ENCODE measurements at regions of chr6 and their contacts with region 1.

Region 1: GRCh38 chr6:155314092-155314772 is at the start of gene TFB1M:
- DNase-seq: peak; percentile 97 to 98 (median 97)
- H3K4me3 ChIP-seq: peak within 1 kb of the TSS; percentile 85 to 95
- H3K4me3 Mint-ChIP-seq: peak within 1 kb of the TSS; percentile 92 to 98 (median 96)
- H3K27ac ChIP-seq: peak within 1 kb of the TSS; percentile 96
- H3K27ac Mint-ChIP-seq: peak within 1 kb of the TSS; percentile 95 to 98 (median 97)
- H3K4me1 ChIP-seq: peaks cover 37% of the 10 kb centered on the region
- H3K4me1 Mint-ChIP-seq: peaks cover 15 to 52% (median 35%) of the 10 kb centered on the region in 4 donors
- H3K27me3 ChIP-seq: no peaks in the 10 kb centered on the region
- H3K27me3 Mint-ChIP-seq: no peaks in the 10 kb centered on the region
- total RNA-seq, gene TFB1M: 36.6 to 45.7 TPM

Region 2: DNA sequence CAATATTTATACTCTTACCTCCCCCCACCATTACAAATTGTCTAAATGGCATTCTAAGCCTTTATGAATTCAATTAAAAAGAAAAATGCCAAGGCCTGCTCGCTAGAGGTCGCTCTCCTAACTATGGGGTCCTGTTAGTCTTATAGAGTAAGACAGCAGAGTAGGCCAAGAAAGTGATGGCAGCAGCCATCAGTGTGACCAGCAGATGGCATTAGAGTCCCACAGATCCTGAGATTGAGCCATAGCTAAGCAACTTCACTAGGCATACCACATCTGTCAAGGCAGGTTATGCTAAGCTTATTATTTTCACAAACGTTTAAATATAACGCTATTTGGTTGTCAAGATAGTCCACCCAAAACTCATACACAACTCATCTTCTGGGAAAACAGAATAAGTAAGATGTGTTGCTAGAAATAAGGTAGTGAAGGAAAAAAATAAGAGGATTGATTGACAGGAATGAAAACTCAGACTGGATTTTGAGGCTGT is 638.6 kb before region 1 on chr6:
- CTCF ChIA-PET with region 1: interaction called, 5 read pairs
- POLR2A ChIA-PET with region 1: no interaction called
- intact Hi-C with region 1: loop called (anchors 2 kb)
- DNase-seq: peak; percentile 85 to 90 (median 87)
- H3K4me3 ChIP-seq: no peak overlapping the region
- H3K4me3 Mint-ChIP-seq: no peak overlapping the region
- H3K27ac ChIP-seq: no peak overlapping the region
- H3K27ac Mint-ChIP-seq: no peak overlapping the region
- H3K4me1 ChIP-seq: no peaks in the 10 kb centered on the region
- H3K4me1 Mint-ChIP-seq: no peaks in the 10 kb centered on the region
- H3K27me3 ChIP-seq: no peaks in the 10 kb centered on the region
- H3K27me3 Mint-ChIP-seq: no peaks in the 10 kb centered on the region

Region 3: GRCh38 chr6:154928325-154928922 is 385.8 kb before region 1 on chr6:
- CTCF ChIA-PET with region 1: interaction called, 3 read pairs
- POLR2A ChIA-PET with region 1: interaction called, 3 read pairs
- intact Hi-C with region 1: loop called (anchors 1 kb)
- DNase-seq: peak; percentile 48 to 56 (median 54)
- H3K4me3 ChIP-seq: no peak overlapping the region
- H3K4me3 Mint-ChIP-seq: no peak overlapping the region
- H3K27ac ChIP-seq: no peak overlapping the region
- H3K27ac Mint-ChIP-seq: peak overlapping the region in 1 of 7 donors; percentile 65
- H3K4me1 ChIP-seq: peaks cover 3% of the 10 kb centered on the region
- H3K4me1 Mint-ChIP-seq: peaks cover 0 to 6% (median 3%) of the 10 kb centered on the region in 4 donors
- H3K27me3 ChIP-seq: no peaks in the 10 kb centered on the region
- H3K27me3 Mint-ChIP-seq: no peaks in the 10 kb centered on the region

Region 4: DNA sequence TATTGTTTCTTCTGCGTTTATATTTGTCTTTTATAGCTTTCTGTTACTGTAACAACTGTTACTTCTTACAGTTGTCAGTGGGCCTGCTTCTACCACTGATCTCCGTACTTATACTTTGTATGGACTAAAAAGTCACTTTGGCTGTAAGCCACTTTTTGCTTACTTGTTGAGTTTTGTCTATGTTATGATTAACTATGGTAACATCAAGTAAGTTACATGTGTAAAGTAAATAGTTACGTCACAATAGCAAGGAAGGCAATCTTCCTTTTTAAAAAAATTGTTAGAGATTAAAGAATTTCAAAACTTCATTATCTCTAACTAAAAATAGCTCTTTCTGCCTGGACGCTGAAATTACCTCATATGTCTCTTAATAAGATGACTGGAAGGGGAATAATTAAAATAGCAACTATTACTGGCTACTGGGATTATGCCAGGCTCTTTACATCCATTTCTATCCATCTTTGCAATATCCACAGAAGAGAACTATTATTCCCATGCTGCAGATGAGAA is 10.8 kb before region 1 on chr6:
- CTCF ChIA-PET with region 1: interaction called, 10 read pairs
- POLR2A ChIA-PET with region 1: interaction called, 15 read pairs
- intact Hi-C with region 1: no loop called
- DNase-seq: no peak
- H3K4me3 ChIP-seq: no peak overlapping the region
- H3K4me3 Mint-ChIP-seq: no peak overlapping the region
- H3K27ac ChIP-seq: no peak overlapping the region
- H3K27ac Mint-ChIP-seq: no peak overlapping the region
- H3K4me1 ChIP-seq: no peaks in the 10 kb centered on the region
- H3K4me1 Mint-ChIP-seq: peaks cover 9 to 23% (median 16%) of the 10 kb centered on the region in 4 donors
- H3K27me3 ChIP-seq: no peaks in the 10 kb centered on the region
- H3K27me3 Mint-ChIP-seq: no peaks in the 10 kb centered on the region

Region 5: DNA sequence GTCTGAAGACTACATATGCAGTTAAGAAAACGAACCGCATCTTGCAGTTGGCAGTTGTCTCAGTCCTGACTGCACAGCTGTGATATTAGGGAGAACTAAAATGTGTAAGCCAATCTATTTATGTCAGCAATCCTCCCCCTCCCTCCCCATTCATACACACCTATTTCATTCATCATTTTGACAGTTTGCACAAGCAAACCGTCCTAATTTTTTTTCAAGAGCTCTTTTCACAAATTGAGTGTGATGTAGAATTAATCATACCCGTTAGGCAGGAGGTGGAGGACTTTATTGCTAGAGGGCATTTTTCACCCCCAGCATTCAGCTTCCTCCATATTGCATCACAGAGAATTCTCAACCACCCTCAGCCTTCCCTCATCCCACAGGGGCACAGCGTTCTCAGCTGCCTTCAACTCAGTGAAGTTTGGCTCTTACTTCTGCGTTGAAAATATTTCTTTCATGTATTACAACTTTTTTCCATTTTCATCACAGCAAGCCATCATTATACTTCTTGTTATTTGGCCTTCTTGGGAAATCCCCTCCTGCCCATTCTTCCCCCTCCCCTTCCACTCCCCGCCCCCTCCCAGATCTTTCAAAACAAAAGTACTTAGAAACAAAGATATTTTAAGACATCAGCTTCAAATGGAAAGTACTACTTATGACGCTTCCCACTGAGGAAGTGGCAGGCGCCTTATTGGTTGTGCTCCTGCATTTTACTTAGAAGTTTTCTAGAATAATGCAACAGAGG is 104.0 kb after region 1 on chr6:
- CTCF ChIA-PET with region 1: interaction called, 3 read pairs
- POLR2A ChIA-PET with region 1: interaction called, 18 read pairs
- intact Hi-C with region 1: loop called (anchors 1 kb)
- DNase-seq: peak; percentile 56 to 86 (median 72)
- H3K4me3 ChIP-seq: peak overlapping the region in 1 of 2 donors; percentile 49
- H3K4me3 Mint-ChIP-seq: peak overlapping the region; percentile 82 to 94 (median 88)
- H3K27ac ChIP-seq: peak overlapping the region; percentile 69
- H3K27ac Mint-ChIP-seq: peak overlapping the region; percentile 93 to 99 (median 98)
- H3K4me1 ChIP-seq: peaks cover 34% of the 10 kb centered on the region
- H3K4me1 Mint-ChIP-seq: peaks cover 32 to 46% (median 39%) of the 10 kb centered on the region in 4 donors
- H3K27me3 ChIP-seq: no peaks in the 10 kb centered on the region
- H3K27me3 Mint-ChIP-seq: no peaks in the 10 kb centered on the region

Region 6: GRCh38 chr6:156776840-156777576 is 1462.8 kb after region 1 on chr6 and contains the start of gene ARID1B:
- CTCF ChIA-PET with region 1: interaction called, 3 read pairs
- POLR2A ChIA-PET with region 1: interaction called, 5 read pairs
- intact Hi-C with region 1: loop called (anchors 1 kb)
- DNase-seq: peak; percentile 84 to 87 (median 86)
- H3K4me3 ChIP-seq: peak within 1 kb of the TSS; percentile 54 to 72
- H3K4me3 Mint-ChIP-seq: peak within 1 kb of the TSS; percentile 92 to 99 (median 96)
- H3K27ac ChIP-seq: peak within 1 kb of the TSS; percentile 84
- H3K27ac Mint-ChIP-seq: peak within 1 kb of the TSS; percentile 97 to 99 (median 99)
- H3K4me1 ChIP-seq: peaks cover 21% of the 10 kb centered on the region
- H3K4me1 Mint-ChIP-seq: peaks cover 19 to 44% (median 30%) of the 10 kb centered on the region in 4 donors
- H3K27me3 ChIP-seq: no peaks in the 10 kb centered on the region
- H3K27me3 Mint-ChIP-seq: no peaks in the 10 kb centered on the region
- total RNA-seq, gene ARID1B: 118 to 131 TPM

Measured in CD4-positive, alpha-beta memory T cell (primary cell).